Activated T-helper 1 cell treated with anti-CD3 and anti-CD28 coated beads, Interleukin-12 subunit alpha, Interleukin-12 subunit beta, Interleukin-2, Interleukin-4 antibody, amounts not matched to agents 30 ng/mL and 10 ng/mL and 1 ng/mL, durations not matched to agents 14 hours and 24 hours and 36 hours (primary cell): ENCODE measurements at regions of chr1 and their contacts with region 1.

Region 1: GRCh38 chr1:2290595-2291510 is 62.7 kb downstream of the SKI start:
- DNase-seq: peak; percentile 74
- H3K4me3 Mint-ChIP-seq: peak overlapping the region; percentile 78
- H3K27ac Mint-ChIP-seq: peak overlapping the region; percentile 88
- H3K4me1 Mint-ChIP-seq: peaks cover 61% of the 10 kb centered on the region
- H3K27me3 Mint-ChIP-seq: no peaks in the 10 kb centered on the region

Region 2: GRCh38 chr1:2233997-2234761 is 56.7 kb before region 1 on chr1:
- intact Hi-C with region 1: loop called (anchors 1 kb)
- DNase-seq: peak; percentile 68
- H3K4me3 Mint-ChIP-seq: peak overlapping the region; percentile 93
- H3K27ac Mint-ChIP-seq: peak overlapping the region; percentile 78
- H3K4me1 Mint-ChIP-seq: peaks cover 71% of the 10 kb centered on the region
- H3K27me3 Mint-ChIP-seq: no peaks in the 10 kb centered on the region

Region 3: DNA sequence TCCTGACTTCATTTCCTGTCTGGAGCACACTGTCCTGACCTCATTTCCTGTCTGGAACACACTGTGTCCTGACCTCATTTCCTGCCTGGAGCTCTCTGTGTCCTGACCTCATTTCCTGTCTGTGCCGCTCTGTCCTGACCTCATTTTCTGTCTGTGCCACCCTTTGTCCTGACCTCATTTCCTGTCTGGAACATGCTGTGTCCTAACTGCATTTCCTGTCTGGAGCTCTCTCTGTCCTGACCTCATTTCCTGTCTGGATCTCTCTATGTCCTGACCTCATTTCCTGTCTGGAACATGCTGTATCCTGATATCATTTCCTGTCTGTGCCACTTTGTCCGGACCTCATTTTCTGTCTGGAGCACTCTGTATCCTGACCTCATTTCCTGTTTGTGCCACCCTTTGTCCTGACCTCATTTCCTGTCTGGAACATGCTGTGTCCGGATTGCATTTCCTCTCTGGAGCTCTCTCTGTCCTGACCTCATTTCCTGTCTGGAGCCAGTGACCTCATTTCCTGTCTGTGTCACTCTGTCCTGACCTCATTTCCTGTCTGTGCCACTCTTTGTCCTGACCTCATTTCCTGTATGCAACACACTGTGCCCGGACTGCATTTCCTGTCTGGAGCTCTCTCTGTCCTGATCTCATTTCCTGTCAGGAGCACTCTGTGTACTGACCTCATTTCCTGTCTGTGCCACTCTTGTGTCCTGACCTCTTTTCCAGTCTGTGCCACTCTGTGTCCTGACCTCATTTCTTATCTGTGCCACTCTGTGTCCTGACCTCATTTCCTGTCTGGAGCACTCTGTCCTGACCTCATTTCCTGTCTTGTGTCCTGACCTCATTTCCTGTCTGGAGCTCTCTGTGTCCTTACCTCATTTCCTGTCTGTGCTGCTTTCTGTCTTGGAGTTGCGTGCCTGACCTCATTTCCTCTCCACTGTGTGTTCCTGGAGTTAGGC is 35.2 kb before region 1 on chr1:
- intact Hi-C with region 1: loop called (anchors 1 kb)
- DNase-seq: peak; percentile 73
- H3K4me3 Mint-ChIP-seq: no peak overlapping the region
- H3K27ac Mint-ChIP-seq: no peak overlapping the region
- H3K4me1 Mint-ChIP-seq: peaks cover 39% of the 10 kb centered on the region
- H3K27me3 Mint-ChIP-seq: no peaks in the 10 kb centered on the region

Region 4: DNA sequence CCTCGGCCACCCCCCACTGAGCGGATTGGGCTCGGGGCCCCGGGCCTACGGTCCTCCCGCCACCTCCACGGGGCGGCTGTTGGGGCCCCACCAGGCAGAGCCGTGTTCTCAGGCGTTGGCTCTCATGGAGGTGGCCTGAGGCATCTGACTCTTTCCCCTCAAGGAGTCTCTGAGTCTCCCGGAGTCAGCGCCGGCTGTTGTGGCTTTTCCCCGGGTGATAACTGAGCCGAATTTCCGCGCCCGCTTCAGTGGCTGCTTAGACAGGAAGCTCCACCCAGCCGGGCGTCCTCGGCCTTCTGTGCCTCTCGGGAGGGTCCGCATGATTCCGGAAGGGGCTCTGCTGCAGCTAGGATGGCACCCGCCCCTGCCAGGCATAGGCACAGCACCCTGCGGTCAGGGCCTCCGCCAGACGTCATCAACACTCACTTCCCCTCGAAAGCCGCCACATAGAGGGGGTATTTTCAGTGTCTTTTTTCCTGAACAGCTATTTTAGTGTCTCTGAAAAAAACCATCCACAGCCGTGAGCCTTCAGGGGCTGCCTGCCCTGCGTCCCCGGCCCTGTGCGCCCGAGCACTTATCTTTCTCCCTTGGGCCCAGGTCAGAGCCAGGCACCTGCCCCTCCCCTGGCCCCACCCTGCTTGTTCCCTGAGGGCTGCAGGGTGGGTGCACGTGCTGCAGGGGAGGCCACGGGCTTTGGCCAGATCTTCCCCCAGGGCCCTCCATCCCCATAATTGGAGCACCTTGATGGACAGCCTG is 10.2 kb after region 1 on chr1:
- intact Hi-C with region 1: loop called (anchors 1 kb)
- DNase-seq: peak; percentile 77
- H3K4me3 Mint-ChIP-seq: peak overlapping the region; percentile 77
- H3K27ac Mint-ChIP-seq: peak overlapping the region; percentile 91
- H3K4me1 Mint-ChIP-seq: peaks cover 35% of the 10 kb centered on the region
- H3K27me3 Mint-ChIP-seq: no peaks in the 10 kb centered on the region

Region 5: DNA sequence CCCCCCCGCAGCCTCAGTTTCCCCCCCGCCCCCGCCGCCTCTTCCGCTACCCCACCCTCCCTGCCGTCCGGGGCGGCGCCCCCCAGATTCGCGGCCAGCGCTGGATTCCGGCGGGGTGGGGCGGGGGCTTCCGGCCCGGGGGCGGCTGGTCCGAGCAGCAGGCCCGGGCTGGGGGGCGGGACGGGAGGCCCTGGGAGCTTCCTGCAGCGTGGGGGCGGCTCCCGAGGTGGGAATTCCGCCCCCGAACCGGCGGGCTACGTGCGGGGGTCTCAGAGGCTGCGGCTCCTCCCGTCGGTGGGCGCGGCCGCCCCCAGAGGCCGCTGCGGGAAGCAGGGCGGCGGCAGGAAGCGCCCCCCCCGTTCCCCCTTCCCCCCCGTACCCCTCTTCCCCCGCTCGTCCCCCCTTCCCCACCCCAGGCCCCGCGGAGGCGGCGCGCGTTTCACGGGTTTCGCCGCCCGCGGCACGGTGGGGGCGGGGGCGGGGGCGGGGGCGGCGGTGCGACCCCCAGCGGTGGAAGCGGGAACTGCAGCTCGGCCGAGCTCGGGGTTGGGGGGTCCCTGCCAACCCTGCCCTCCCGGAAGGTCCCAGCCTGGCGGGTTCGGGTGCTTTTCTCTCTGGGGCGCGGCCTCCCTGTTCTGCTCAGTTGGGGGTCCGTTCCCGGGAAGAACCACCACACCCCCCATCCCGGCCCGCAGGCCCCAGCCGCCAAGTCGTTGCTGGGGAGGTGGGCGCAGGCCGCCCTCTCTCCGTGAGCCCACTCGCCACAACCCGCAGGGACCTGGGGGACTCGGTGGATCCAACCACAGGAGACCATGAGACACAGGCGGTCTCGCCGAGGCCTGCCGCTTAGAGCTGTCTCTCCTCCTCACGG is 24.2 kb after region 1 on chr1:
- intact Hi-C with region 1: loop called (anchors 2 kb)
- DNase-seq: peak; percentile 45
- H3K4me3 Mint-ChIP-seq: no peak overlapping the region
- H3K27ac Mint-ChIP-seq: peak overlapping the region; percentile 63
- H3K4me1 Mint-ChIP-seq: no peaks in the 10 kb centered on the region
- H3K27me3 Mint-ChIP-seq: no peaks in the 10 kb centered on the region

Region 6: DNA sequence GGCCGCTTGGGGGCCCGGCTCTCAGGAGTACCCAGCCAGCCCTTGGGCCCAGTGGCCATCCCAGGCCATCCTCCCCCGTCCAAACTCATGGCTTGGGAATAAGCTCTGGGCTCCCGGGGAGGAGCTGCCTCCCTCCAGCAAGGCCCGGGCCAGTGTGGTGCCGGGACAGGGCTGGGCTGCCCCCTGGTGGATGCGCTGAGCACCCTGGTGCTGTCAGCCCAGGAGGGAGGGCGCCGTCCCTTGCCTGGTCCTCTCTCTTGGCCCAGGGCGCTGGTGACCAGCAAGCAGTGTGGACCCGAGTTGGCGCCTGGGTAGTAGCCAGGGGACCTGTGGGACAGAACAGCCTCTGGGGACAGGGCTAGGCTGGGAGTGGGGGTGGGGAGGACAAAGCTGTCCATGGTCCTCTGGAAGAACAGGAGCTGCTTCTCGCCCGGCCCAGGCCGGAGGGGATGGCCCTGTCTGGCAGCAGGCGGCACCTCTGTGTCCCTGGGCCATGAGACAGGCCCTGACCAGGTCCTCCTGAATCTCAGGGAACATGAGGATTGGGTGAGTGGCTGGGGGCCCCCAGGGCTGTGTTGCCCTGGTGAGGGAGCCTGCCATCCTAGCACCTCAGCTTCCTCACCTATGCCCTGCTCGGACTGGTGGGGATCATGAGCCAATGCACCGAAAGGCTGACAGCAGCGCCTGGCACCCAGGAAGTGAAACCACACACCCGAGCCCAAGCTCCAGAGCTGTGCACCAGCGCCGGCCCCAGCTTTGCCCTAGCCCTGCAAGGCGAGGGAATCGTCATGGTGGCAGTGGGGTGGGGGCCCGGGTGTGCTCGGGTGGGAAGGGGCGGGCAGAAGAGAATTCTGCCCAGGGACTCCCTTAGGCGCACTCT is 91.1 kb after region 1 on chr1:
- intact Hi-C with region 1: loop called (anchors 10 kb)
- DNase-seq: peak; percentile 67
- H3K4me3 Mint-ChIP-seq: no peak overlapping the region
- H3K27ac Mint-ChIP-seq: no peak overlapping the region
- H3K4me1 Mint-ChIP-seq: no peaks in the 10 kb centered on the region
- H3K27me3 Mint-ChIP-seq: no peaks in the 10 kb centered on the region